ENCODE measurements at regions of chr3 and their contacts with region 1.

Region 1: GRCh38 chr3:68089572-68090011 is 435.2 kb upstream of the SUCLG2 start:
- DNase-seq: no peak
- H3K4me3 ChIP-seq: no peak overlapping the region
- H3K27ac ChIP-seq: no peak overlapping the region
- H3K4me1 ChIP-seq: no peaks in the 10 kb centered on the region
- H3K27me3 ChIP-seq: no peaks in the 10 kb centered on the region
- CTCF ChIP-seq: no peak
- EP300 ChIP-seq: no peak
- POLR2A ChIP-seq: no peak

Region 2: GRCh38 chr3:66948041-66948440 is 1141.6 kb before region 1 on chr3:
- in situ Hi-C with region 1: no loop called
- intact Hi-C with region 1: loop called (anchors 10 kb)
- DNase-seq: no peak
- H3K4me3 ChIP-seq: no peak overlapping the region
- H3K27ac ChIP-seq: no peak overlapping the region
- H3K4me1 ChIP-seq: peaks cover 0 to 17% (median 4%) of the 10 kb centered on the region in 4 donors
- H3K27me3 ChIP-seq: no peaks in the 10 kb centered on the region
- CTCF ChIP-seq: no peak
- EP300 ChIP-seq: no peak
- POLR2A ChIP-seq: no peak

Region 3: GRCh38 chr3:68186733-68187132 is 97.1 kb after region 1 on chr3:
- in situ Hi-C with region 1: no loop called
- intact Hi-C with region 1: no loop called
- DNase-seq: no peak
- H3K4me3 ChIP-seq: no peak overlapping the region
- H3K27ac ChIP-seq: no peak overlapping the region
- H3K4me1 ChIP-seq: no peaks in the 10 kb centered on the region
- H3K27me3 ChIP-seq: no peaks in the 10 kb centered on the region
- CTCF ChIP-seq: no peak
- EP300 ChIP-seq: no peak
- POLR2A ChIP-seq: no peak

Measured in transverse colon (tissue), 4 donors.